K562 (cell line): ENCODE measurements at regions of chr12 and their contacts with region 1.

Region 1: DNA sequence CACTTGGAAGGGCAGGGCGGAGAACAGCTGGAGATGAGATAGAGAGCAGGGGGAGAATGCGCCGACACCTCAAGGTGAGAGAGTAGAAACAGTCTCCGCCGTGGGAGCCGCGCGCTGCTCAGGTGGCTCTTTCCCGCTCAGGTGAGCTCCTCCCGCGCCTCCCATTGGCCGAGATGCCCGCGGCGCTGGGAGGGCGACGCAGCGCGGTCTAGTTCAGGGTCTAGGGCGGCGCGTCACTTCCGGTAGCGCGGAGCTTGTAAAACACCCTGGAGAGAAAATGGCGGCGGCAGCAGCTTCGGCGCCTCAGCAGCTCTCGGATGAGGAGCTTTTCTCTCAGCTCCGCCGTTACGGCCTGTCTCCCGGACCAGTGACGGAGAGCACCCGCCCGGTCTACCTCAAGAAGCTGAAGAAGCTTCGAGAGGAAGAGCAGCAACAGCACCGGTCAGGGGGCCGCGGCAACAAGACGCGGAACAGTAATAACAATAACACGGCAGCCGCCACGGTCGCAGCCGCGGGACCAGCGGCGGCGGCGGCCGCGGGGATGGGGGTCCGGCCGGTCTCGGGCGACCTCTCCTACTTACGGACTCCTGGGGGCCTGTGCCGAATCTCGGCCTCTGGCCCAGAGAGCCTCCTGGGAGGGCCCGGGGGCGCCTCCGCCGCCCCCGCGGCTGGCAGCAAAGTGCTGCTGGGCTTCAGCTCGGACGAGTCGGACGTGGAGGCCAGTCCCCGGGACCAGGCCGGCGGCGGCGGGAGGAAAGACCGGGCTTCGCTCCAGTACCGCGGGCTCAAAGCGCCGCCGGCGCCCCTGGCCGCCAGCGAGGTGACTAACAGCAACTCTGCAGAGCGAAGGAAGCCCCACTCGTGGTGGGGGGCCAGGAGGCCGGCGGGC is at the start of gene LEMD3:
- DNase-seq: peak; percentile 92 to 96 (median 93)
- ATAC-seq: peak; percentile 90
- H3K4me3 ChIP-seq: peak within 1 kb of the TSS; percentile 92
- H3K27ac ChIP-seq: peak within 1 kb of the TSS; percentile 87
- H3K4me1 ChIP-seq: peaks cover 15 to 22% of the 10 kb centered on the region in 2 experiments; a peak in 4 of 5 replicates
- H3K27me3 ChIP-seq: no peaks in the 10 kb centered on the region; a peak in 1 of 5 replicates
- CTCF ChIP-seq: no peak
- EP300 ChIP-seq: no peak
- POLR2A ChIP-seq: peak; percentile 93
- RAD21 ChIP-seq: no peak
- polyA plus RNA-seq, gene LEMD3: 6.8 to 7.5 TPM

Region 2: GRCh38 chr12:63480186-63480585 is 1689.4 kb before region 1 on chr12:
- CTCF ChIA-PET with region 1: no interaction called
- POLR2A ChIA-PET with region 1: no interaction called
- in situ Hi-C with region 1: no loop called
- intact Hi-C with region 1: no loop called
- DNase-seq: no peak
- ATAC-seq: no peak
- H3K4me3 ChIP-seq: no peak overlapping the region
- H3K27ac ChIP-seq: no peak overlapping the region
- H3K4me1 ChIP-seq: no peaks in the 10 kb centered on the region
- H3K27me3 ChIP-seq: no peaks in the 10 kb centered on the region
- CTCF ChIP-seq: no peak
- EP300 ChIP-seq: no peak
- POLR2A ChIP-seq: no peak
- RAD21 ChIP-seq: no peak

Region 3: GRCh38 chr12:65182012-65182739 is 12.6 kb after region 1 on chr12:
- CTCF ChIA-PET with region 1: no interaction called
- POLR2A ChIA-PET with region 1: interaction called, 19 read pairs
- in situ Hi-C with region 1: no loop called
- intact Hi-C with region 1: no loop called
- DNase-seq: peak in 2 of 4 experiments; percentile 10 to 39
- ATAC-seq: peak; percentile 66
- H3K4me3 ChIP-seq: no peak overlapping the region
- H3K27ac ChIP-seq: no peak overlapping the region
- H3K4me1 ChIP-seq: peaks cover 0 to 12% of the 10 kb centered on the region in 2 experiments; a peak in 2 of 5 replicates
- H3K27me3 ChIP-seq: no peaks in the 10 kb centered on the region
- CTCF ChIP-seq: no peak
- EP300 ChIP-seq: peak; percentile 85
- POLR2A ChIP-seq: no peak
- RAD21 ChIP-seq: no peak

Region 4: GRCh38 chr12:65232476-65233077 is 63.0 kb after region 1 on chr12:
- CTCF ChIA-PET with region 1: no interaction called
- POLR2A ChIA-PET with region 1: no interaction called
- in situ Hi-C with region 1: no loop called
- intact Hi-C with region 1: loop called (anchors 5 kb)
- DNase-seq: peak in 2 of 4 experiments; percentile 10 to 12
- ATAC-seq: no peak
- H3K4me3 ChIP-seq: no peak overlapping the region
- H3K27ac ChIP-seq: no peak overlapping the region
- H3K4me1 ChIP-seq: no peaks in the 10 kb centered on the region
- H3K27me3 ChIP-seq: no peaks in the 10 kb centered on the region
- CTCF ChIP-seq: peak in 1 of 3 experiments; percentile 48; a peak in 2 of 6 replicates
- EP300 ChIP-seq: no peak
- POLR2A ChIP-seq: no peak
- RAD21 ChIP-seq: peak; percentile 59 to 60

Region 5: GRCh38 chr12:65248656-65249633 is 79.4 kb after region 1 on chr12:
- CTCF ChIA-PET with region 1: no interaction called
- POLR2A ChIA-PET with region 1: no interaction called
- in situ Hi-C with region 1: no loop called
- intact Hi-C with region 1: no loop called
- DNase-seq: peak in 1 of 4 experiments; percentile 1
- ATAC-seq: no peak
- H3K4me3 ChIP-seq: no peak overlapping the region
- H3K27ac ChIP-seq: no peak overlapping the region
- H3K4me1 ChIP-seq: no peaks in the 10 kb centered on the region
- H3K27me3 ChIP-seq: no peaks in the 10 kb centered on the region
- CTCF ChIP-seq: no peak
- EP300 ChIP-seq: no peak
- POLR2A ChIP-seq: 0 out of 2 replicates have a peak, but pooled peaks have one; percentile 29
- RAD21 ChIP-seq: no peak

Region 6: DNA sequence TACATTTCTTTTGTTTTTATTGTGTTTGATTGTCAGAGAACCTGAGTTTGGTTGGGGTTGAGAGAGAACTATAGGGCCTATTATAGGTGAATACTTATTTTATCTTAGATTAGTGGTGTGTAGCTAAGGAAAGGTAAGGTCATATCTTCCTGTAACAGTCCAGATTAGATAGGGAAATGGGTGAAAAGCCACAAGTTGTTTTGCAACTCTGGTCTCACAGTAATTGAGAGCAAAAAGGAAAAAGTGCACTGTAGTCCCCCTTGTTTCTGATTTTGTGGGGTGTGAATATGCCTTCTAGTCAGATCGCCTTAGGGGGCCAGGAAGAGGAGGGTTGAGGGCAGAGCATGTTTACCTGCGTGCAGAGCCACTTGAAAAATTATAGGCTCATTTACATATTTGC is 117.9 kb after region 1 on chr12:
- CTCF ChIA-PET with region 1: no interaction called
- POLR2A ChIA-PET with region 1: no interaction called
- in situ Hi-C with region 1: no loop called
- intact Hi-C with region 1: no loop called
- DNase-seq: no peak
- ATAC-seq: no peak
- H3K4me3 ChIP-seq: no peak overlapping the region
- H3K27ac ChIP-seq: no peak overlapping the region
- H3K4me1 ChIP-seq: no peaks in the 10 kb centered on the region
- H3K27me3 ChIP-seq: no peaks in the 10 kb centered on the region; a peak in 2 of 5 replicates
- CTCF ChIP-seq: no peak
- EP300 ChIP-seq: no peak
- POLR2A ChIP-seq: no peak
- RAD21 ChIP-seq: no peak